Activated CD8-positive, alpha-beta T cell treated with anti-CD3 and anti-CD28 coated beads for 36 hours (primary cell): ENCODE measurements at regions of chr19 and their contacts with region 1.

Region 1: DNA sequence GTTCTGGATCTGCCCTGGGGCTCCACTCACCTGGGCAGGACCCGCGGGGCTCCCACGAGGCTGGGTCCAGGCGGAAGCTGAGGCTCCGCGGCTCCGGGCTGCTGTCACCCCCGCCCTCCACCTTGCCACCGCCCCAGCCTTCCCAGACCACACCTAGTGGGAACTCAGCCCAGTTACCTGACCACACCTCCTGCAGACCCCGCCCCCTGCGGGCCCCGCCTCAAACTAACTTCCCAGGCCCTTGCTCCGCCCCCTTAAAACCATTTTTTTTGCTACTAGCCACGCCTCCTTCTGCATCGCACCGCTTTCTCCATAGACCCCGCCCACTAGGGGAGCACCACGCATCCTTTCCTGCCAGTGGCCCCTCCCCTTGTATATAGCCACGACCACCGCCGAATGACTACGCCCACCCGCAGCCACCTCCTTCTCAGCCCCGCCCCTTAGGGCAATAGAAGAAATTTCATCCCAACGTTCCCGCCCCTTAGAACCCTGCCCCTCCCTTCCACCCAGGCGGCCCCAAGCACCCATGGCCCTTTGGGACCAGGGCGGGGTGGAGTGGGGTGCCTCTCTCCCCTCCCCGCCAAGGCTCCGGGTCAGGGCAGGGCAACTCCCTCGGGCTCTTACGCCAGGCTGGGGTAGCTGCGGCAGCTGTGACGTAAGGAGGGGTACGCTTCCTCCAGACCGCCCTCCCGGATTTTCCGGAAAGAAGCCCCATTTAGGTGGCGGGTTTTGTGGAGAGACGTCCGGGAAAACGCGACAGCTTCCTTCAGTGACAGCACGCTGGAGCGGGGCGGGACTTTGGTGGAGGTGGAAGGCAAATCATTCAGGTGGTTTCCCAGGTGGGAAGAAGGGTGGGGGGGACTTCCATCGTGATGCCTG is at the start of gene SH2D3A:
- DNase-seq: peak; percentile 98
- ATAC-seq: peak; percentile 78
- H3K4me3 Mint-ChIP-seq: peak within 1 kb of the TSS; percentile 93
- H3K27ac Mint-ChIP-seq: peak within 1 kb of the TSS; percentile 94
- H3K4me1 Mint-ChIP-seq: peaks cover 35% of the 10 kb centered on the region
- H3K27me3 Mint-ChIP-seq: no peaks in the 10 kb centered on the region
- CTCF ChIP-seq: no peak
- total RNA-seq, gene SH2D3A: 20.6 to 20.9 TPM

Region 2: GRCh38 chr19:6790194-6791128 is 22.9 kb after region 1 on chr19:
- CTCF ChIA-PET with region 1: interaction called, 10 read pairs
- POLR2A ChIA-PET with region 1: interaction called, 8 read pairs
- intact Hi-C with region 1: no loop called
- DNase-seq: no peak
- ATAC-seq: no peak
- H3K4me3 Mint-ChIP-seq: no peak overlapping the region
- H3K27ac Mint-ChIP-seq: peak overlapping the region; percentile 55
- H3K4me1 Mint-ChIP-seq: peaks cover 57% of the 10 kb centered on the region
- H3K27me3 Mint-ChIP-seq: no peaks in the 10 kb centered on the region
- CTCF ChIP-seq: no peak

Region 3: DNA sequence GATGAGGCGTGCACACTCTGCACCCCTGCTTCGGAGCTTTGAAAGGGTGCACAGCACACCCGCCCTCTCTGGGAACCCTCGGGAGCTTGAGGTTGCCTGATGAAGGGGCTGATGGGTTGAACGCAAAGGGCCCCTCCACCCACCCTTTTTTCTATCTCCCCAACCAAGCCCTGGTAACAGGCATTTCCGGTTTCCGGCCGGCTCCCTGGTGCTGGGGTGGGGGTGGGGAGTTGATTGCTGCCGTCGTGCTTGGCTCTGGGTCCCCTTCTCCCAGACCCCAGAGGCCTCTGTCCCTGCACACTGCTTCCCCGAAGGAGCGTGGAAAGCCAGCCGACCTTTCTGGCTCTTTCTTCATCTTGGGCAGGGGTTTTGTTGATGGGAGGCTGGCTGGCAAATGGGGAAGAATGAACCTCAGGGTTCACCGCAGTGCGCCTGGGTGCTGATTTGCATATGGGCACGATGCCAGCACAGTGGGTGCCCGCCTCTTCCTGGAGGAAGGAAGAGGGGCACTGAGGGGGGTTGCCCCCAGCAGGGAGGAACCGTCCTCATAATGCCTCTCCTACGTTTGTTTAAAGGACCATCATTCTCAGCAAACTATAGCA is 34.0 kb after region 1 on chr19:
- CTCF ChIA-PET with region 1: interaction called, 16 read pairs
- POLR2A ChIA-PET with region 1: interaction called, 45 read pairs
- intact Hi-C with region 1: loop called (anchors 5 kb)
- DNase-seq: peak; percentile 91
- ATAC-seq: peak; percentile 74
- H3K4me3 Mint-ChIP-seq: peak overlapping the region; percentile 95
- H3K27ac Mint-ChIP-seq: peak overlapping the region; percentile 93
- H3K4me1 Mint-ChIP-seq: peaks cover 56% of the 10 kb centered on the region
- H3K27me3 Mint-ChIP-seq: no peaks in the 10 kb centered on the region
- CTCF ChIP-seq: no peak

Region 4: GRCh38 chr19:6811906-6812305 is 44.3 kb after region 1 on chr19:
- CTCF ChIA-PET with region 1: interaction called, 4 read pairs
- POLR2A ChIA-PET with region 1: interaction called, 17 read pairs
- intact Hi-C with region 1: no loop called
- DNase-seq: no peak
- ATAC-seq: no peak
- H3K4me3 Mint-ChIP-seq: no peak overlapping the region
- H3K27ac Mint-ChIP-seq: peak overlapping the region; percentile 14
- H3K4me1 Mint-ChIP-seq: peaks cover 69% of the 10 kb centered on the region
- H3K27me3 Mint-ChIP-seq: no peaks in the 10 kb centered on the region
- CTCF ChIP-seq: no peak

Region 5: GRCh38 chr19:6862673-6863078 is 95.1 kb after region 1 on chr19:
- CTCF ChIA-PET with region 1: interaction called, 25 read pairs
- POLR2A ChIA-PET with region 1: interaction called, 11 read pairs
- intact Hi-C with region 1: loop called (anchors 10 kb)
- DNase-seq: peak; percentile 97
- ATAC-seq: peak; percentile 88
- H3K4me3 Mint-ChIP-seq: peak overlapping the region; percentile 77
- H3K27ac Mint-ChIP-seq: peak overlapping the region; percentile 79
- H3K4me1 Mint-ChIP-seq: peaks cover 14% of the 10 kb centered on the region
- H3K27me3 Mint-ChIP-seq: no peaks in the 10 kb centered on the region
- CTCF ChIP-seq: peak; percentile 81